ENCODE measurements at regions of chr15 and their contacts with region 1.

Region 1: DNA sequence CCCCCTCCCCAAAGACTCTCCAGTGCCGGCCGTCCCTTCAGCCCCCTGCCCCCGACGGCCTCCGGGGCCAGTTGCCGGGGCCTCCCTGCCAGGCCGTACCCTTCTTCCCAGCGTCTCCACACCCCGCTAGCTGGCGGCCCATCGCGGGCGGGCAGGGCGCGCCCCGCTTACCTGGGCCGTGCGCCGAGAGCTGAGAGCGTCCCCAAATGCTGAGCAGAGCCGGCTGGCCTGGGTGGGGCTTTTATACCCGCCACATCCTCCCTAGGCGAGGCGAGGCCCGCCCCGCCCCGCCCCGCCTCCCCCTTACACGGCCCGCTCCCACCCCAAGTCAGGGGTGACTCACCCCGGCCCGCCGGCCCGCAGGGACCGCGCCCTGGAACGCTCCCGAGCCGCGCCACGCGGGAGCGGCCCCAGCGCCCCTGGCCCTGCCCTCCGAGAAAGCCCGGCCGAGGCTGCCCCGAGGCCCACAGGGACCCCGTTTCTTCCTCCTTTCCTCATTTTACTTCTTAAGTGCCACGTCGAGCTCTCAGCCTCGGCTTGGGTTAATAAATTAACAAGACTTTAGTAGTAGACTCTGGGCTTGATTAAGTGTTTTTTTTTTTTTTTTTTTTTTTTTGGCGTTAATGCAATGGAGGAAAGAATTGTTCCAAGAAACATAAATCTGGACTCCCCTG is at the start of gene ANXA2:
- DNase-seq: peak; percentile 87 to 88
- ATAC-seq: peak; percentile 80 to 95 (median 85)
- H3K4me3 ChIP-seq: peak within 1 kb of the TSS; percentile 59 to 94 (median 88)
- H3K27ac ChIP-seq: peak within 1 kb of the TSS; percentile 90 to 98 (median 97)
- H3K4me1 ChIP-seq: peaks cover 16 to 52% (median 40%) of the 10 kb centered on the region in 9 donors
- H3K27me3 ChIP-seq: no peaks in the 10 kb centered on the region
- CTCF ChIP-seq: no peak
- total RNA-seq, gene ANXA2: 98.7 to 341 (median 123) TPM

Region 2: DNA sequence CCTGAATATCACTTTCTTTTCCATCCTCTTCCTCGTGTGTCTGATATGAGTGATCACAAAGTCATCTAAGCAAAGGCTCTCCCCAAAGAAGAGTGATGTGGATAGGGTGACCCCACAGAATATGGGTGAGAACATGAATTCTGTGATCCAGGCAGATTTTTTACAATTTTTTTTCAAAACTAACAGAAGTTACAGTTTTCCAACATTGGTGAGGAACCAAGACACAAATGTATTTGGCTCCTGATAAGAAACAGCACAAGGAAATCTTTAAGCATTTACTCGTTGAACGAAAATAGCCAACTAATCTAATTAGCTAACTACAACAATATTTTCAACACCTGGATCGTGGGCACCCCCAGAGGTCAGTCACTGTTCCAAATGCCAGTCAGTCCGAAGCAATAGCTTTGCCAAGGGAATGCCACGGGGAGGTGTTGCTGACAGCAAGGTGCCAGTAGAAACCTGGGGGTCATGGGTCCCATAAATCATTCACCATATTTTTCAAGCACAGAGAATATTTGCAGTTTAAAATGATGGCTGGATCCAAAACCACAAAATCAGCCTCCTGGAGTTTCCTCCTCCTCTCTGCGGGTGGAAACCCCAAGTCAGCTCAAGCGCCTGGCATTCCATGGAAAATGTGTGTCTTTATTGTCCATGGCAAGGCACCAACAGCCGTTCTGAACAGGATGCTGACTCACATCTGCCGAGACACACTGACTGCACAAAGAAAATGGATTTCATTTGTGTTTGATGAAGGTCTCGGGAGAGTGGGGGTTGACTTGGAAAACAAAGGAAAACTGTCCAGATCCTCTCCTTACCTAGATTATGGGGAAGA is 26.8 kb before region 1 on chr15:
- intact Hi-C with region 1: loop called in 2 of 10 experiments (anchors 2 kb)
- DNase-seq: peak in 1 of 2 donors; percentile 86
- ATAC-seq: peak; percentile 68 to 86 (median 72)
- H3K4me3 ChIP-seq: peak overlapping the region in 1 of 10 donors; percentile 10
- H3K27ac ChIP-seq: peak overlapping the region; percentile 19 to 95 (median 80)
- H3K4me1 ChIP-seq: peaks cover 3 to 78% (median 66%) of the 10 kb centered on the region in 9 donors
- H3K27me3 ChIP-seq: no peaks in the 10 kb centered on the region
- CTCF ChIP-seq: peak in 1 of 9 donors; percentile 5